ENCODE measurements at regions of chr16 and their contacts with region 1.

Region 1: GRCh38 chr16:57519796-57520360 is 16.5 kb downstream of the CCDC102A start:
- DNase-seq: peak; percentile 78
- H3K27ac ChIP-seq: no peak overlapping the region
- CTCF ChIP-seq: peak; percentile 96

Region 2: DNA sequence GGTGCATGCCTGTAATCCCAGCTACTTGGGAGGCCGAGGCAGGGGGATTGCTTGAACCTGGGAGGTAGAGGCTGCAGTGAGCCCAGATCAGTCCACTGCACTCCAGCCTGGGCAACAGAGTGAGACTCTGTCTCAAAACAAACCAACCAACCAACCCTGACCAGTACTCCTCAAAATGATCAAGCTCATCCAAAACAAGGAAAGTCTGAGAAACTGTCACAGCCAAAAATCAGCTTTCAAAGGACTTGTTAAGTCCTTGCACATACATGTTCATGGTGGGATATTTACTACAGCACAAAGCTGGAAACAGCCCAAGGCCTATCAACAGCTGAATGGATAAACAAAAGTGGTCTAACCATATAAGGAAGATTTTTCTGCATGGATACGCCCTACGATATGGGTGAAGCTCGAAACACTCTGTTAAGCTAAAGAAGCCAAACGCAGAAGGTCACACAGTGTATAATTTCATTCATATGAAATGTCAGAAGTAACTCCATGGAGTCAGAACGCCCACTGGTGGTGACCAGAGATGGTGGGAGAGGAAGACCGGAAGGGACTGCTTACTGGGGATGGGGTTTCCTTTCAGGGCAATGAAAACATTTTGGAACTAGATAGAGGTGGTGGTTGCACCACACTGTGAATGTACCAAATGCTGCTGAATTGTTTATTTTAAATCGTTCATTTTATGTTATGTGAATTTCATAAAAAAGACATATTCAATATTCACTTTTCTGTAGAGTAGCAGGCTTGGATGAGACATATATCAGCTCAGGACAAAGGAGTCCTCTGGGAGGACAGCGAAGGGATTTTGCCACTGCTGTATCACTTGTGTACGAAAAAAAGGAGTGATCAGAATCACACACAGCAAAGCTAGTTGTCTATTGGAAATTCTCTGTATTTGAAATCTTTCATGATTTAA is 97.6 kb before region 1 on chr16:
- CTCF ChIA-PET with region 1: interaction called, 12 read pairs
- POLR2A ChIA-PET with region 1: no interaction called
- DNase-seq: peak; percentile 30
- H3K27ac ChIP-seq: no peak overlapping the region
- CTCF ChIP-seq: peak; percentile 60

Region 3: GRCh38 chr16:57462209-57462977 is 57.5 kb before region 1 on chr16 and contains the start of gene POLR2C:
- CTCF ChIA-PET with region 1: interaction called, 11 read pairs
- POLR2A ChIA-PET with region 1: interaction called, 3 read pairs
- DNase-seq: peak; percentile 81
- H3K27ac ChIP-seq: peak within 1 kb of the TSS; percentile 71
- CTCF ChIP-seq: peak; percentile 97

Region 4: GRCh38 chr16:57530104-57530521 is 10.2 kb after region 1 on chr16:
- CTCF ChIA-PET with region 1: interaction called, 11 read pairs
- POLR2A ChIA-PET with region 1: no interaction called
- DNase-seq: peak; percentile 39
- H3K27ac ChIP-seq: peak overlapping the region; percentile 44
- CTCF ChIP-seq: no peak